ENCODE measurements at regions of chr11 and their contacts with region 1.

Region 1: GRCh38 chr11:113875234-113876073 is at the start of gene USP28:
- DNase-seq: peak; percentile 89
- ATAC-seq: peak; percentile 80
- H3K4me3 Mint-ChIP-seq: peak within 1 kb of the TSS; percentile 90
- H3K27ac Mint-ChIP-seq: peak within 1 kb of the TSS; percentile 92
- H3K4me1 Mint-ChIP-seq: peaks cover 45% of the 10 kb centered on the region
- H3K27me3 Mint-ChIP-seq: no peaks in the 10 kb centered on the region
- total RNA-seq, gene USP28: 38.6 to 43.9 TPM

Region 2: DNA sequence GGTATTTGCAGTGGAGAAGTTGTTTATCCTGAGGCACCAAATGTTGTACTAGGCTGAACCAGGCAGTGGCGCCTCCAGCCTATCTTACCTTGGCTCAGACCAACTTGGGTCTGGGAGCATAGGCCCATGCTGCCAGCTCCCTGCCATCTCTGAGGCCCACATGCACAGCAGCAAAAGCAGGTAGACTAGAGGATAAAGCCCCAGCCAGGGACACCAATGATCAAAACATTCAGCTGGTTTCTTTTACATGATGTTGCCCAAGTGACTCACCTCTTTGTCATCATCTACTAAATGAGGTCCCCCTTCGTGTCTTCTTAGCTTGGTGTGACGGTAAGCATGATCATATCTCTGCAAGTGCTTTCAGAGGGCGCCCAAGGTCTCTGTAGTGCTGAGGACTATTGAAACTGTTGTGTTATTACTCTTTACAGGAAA is 288.1 kb before region 1 on chr11:
- CTCF ChIA-PET with region 1: no interaction called
- POLR2A ChIA-PET with region 1: no interaction called
- intact Hi-C with region 1: loop called in 1 of 2 experiments (anchors 1 kb)
- DNase-seq: peak; percentile 76
- ATAC-seq: peak; percentile 99
- H3K4me3 Mint-ChIP-seq: no peak overlapping the region
- H3K27ac Mint-ChIP-seq: peak overlapping the region; percentile 82
- H3K4me1 Mint-ChIP-seq: peaks cover 15% of the 10 kb centered on the region
- H3K27me3 Mint-ChIP-seq: peaks cover 8% of the 10 kb centered on the region

Region 3: DNA sequence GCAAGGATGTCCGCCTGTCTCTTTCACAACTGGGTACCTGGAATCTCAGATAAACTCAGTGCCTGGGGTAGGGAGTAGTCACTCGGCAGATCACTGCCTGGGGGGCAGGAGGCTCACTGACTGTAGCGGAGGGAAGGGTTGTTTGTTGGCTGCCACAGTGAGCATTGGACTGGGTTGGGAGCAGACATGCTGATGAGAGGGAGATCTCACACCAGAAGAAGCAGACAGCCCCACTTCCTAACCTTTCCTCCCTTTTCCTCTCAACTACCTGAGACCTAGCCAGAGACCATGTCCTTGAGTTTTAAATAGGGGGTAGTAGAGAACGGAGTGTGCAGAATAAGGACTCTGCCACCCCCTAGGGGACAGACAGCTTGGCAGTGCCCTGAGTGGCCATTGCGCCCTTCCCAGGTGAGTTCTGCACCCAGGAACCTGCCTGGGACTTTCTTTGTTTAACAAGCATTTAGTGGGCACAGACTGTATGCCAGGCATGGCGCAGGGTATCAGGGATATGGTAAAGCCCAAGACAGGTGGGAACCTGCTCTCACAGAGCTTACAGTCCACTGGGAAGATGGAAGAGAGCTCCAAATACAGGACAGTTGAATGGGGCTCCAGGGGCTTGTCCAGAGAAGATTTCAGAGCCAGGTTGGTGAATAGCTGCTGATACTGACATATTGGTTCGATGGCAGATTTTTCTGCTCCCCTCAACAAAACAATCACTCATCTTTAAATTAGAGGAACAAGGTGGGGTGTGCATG is 305.0 kb after region 1 on chr11:
- CTCF ChIA-PET with region 1: no interaction called
- POLR2A ChIA-PET with region 1: no interaction called
- intact Hi-C with region 1: loop called in 1 of 2 experiments (anchors 5 kb)
- DNase-seq: peak; percentile 37
- ATAC-seq: peak; percentile 24
- H3K4me3 Mint-ChIP-seq: no peak overlapping the region
- H3K27ac Mint-ChIP-seq: no peak overlapping the region
- H3K4me1 Mint-ChIP-seq: peaks cover 59% of the 10 kb centered on the region
- H3K27me3 Mint-ChIP-seq: no peaks in the 10 kb centered on the region

Region 4: DNA sequence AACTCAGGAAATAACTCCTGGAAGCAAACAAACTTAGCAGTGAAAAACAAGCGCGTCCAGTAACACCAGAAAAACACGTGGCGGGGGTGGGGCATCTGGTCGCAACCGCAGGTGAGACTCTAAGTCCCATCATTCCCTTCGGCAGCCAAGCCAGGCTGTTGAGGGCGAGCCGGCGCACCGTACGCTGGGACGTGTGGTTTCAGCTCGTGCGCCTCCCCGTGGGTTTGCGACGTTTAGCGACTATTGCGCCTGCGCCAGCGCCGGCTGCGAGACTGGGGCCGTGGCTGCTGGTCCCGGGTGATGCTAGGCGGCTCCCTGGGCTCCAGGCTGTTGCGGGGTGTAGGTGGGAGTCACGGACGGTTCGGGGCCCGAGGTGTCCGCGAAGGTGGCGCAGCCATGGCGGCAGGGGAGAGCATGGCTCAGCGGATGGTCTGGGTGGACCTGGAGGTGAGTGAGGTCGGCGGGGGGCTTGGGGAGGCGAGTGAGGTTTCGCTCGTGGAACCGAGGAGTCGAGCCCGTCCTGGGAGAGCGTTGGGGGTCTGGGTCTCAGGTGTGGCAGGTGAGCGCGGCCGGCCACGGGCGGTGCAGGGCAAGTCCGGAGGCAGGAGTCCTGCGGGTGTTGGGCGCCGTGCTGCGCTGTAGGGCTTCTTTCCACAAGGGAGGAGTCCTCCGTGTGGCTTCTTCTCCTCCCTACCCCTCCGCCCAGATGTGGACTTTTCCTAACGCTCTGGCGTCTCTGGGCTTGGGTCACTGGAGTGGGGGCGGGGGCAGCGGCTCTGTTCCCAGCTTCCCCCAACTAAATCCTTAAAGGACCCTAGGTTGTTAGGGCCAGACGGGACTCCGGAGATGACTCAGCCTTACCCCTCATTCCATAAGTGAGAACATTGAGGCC is 564.0 kb after region 1 on chr11 and contains the start of gene REXO2:
- CTCF ChIA-PET with region 1: no interaction called
- POLR2A ChIA-PET with region 1: no interaction called
- intact Hi-C with region 1: loop called in 1 of 2 experiments (anchors 10 kb)
- DNase-seq: peak; percentile 96
- ATAC-seq: peak; percentile 97
- H3K4me3 Mint-ChIP-seq: peak within 1 kb of the TSS; percentile 93
- H3K27ac Mint-ChIP-seq: peak within 1 kb of the TSS; percentile 93
- H3K4me1 Mint-ChIP-seq: peaks cover 27% of the 10 kb centered on the region
- H3K27me3 Mint-ChIP-seq: no peaks in the 10 kb centered on the region
- total RNA-seq, gene REXO2: 66.6 to 70.0 TPM